Naive thymus-derived CD8-positive, alpha-beta T cell (primary cell): ENCODE measurements at regions of chr9 and their contacts with region 1.

Region 1: DNA sequence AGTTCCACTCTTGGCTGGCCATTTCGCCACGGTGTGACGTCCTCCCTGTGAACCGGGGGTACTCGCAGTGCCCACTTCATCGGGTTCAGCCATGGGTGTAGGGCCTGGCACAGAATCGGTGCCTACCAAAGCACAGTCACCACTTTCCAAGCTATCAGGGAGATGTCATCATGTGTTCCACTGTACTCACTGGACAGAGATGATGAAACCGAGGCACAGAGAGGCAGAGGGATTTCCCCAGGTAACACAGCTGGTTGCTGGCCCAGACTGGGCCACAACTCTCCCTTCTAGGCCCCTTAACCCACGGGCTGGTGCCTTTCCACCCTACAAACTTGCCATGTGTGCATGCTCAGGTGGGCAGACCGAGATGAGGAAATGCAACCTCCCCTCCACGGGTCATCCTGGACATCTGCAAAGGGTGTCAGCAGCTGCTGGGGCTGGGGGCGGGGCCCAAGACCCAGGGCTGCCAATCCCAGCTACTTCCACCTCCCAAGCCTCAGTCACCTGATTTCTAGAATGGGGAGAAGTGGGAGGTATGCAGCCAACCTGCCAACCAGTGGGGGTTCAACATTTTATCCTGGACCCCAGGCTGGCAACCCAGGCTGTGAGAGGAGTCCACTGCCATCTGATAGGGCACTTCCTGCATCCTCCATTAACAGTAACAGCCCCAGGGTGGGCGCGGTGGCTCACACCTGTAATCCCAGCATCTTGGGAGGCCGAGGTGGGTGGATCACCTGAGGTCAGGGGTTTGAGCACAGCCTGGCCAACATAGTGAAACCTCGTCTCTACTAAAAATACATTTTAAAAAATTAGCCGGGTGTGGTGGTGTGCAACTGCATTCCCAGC is 893 bp upstream of the SH2D3C start:
- DNase-seq: no peak
- ATAC-seq: peak; percentile 9 to 29
- H3K4me3 Mint-ChIP-seq: peak overlapping the region; percentile 90 to 100 (median 98)
- H3K27ac Mint-ChIP-seq: peak overlapping the region; percentile 71 to 99 (median 96)
- H3K4me1 Mint-ChIP-seq: peaks cover 30 to 79% (median 62%) of the 10 kb centered on the region in 4 donors
- H3K27me3 Mint-ChIP-seq: no peaks in the 10 kb centered on the region

Region 2: GRCh38 chr9:127574072-127575017 is 205.0 kb before region 1 on chr9:
- POLR2A ChIA-PET with region 1: no interaction called
- DNase-seq: peak in 1 of 10 donors; percentile 52
- ATAC-seq: no peak
- H3K4me3 Mint-ChIP-seq: no peak overlapping the region
- H3K27ac Mint-ChIP-seq: no peak overlapping the region
- H3K4me1 Mint-ChIP-seq: peaks cover 16 to 27% (median 23%) of the 10 kb centered on the region in 4 donors
- H3K27me3 Mint-ChIP-seq: no peaks in the 10 kb centered on the region

Region 3: GRCh38 chr9:127742435-127743088 is 36.8 kb before region 1 on chr9:
- POLR2A ChIA-PET with region 1: interaction called, 54 read pairs
- DNase-seq: no peak
- ATAC-seq: no peak
- H3K4me3 Mint-ChIP-seq: no peak overlapping the region
- H3K27ac Mint-ChIP-seq: peak overlapping the region in 3 of 10 donors; percentile 27 to 84 (median 39)
- H3K4me1 Mint-ChIP-seq: peaks cover 6 to 16% (median 11%) of the 10 kb centered on the region in 4 donors
- H3K27me3 Mint-ChIP-seq: no peaks in the 10 kb centered on the region